Activated T-helper 2 cell treated with anti-CD3 and anti-CD28 coated beads, Interferon-gamma antibody, Interleukin-2, Interleukin-4, amounts not matched to agents 10 μg/mL and 5 μg/mL and 100 μg/mL, durations not matched to agents 14 hours and 24 hours and 36 hours (primary cell): ENCODE measurements at regions of chr4 and their contacts with region 1.

Region 1: DNA sequence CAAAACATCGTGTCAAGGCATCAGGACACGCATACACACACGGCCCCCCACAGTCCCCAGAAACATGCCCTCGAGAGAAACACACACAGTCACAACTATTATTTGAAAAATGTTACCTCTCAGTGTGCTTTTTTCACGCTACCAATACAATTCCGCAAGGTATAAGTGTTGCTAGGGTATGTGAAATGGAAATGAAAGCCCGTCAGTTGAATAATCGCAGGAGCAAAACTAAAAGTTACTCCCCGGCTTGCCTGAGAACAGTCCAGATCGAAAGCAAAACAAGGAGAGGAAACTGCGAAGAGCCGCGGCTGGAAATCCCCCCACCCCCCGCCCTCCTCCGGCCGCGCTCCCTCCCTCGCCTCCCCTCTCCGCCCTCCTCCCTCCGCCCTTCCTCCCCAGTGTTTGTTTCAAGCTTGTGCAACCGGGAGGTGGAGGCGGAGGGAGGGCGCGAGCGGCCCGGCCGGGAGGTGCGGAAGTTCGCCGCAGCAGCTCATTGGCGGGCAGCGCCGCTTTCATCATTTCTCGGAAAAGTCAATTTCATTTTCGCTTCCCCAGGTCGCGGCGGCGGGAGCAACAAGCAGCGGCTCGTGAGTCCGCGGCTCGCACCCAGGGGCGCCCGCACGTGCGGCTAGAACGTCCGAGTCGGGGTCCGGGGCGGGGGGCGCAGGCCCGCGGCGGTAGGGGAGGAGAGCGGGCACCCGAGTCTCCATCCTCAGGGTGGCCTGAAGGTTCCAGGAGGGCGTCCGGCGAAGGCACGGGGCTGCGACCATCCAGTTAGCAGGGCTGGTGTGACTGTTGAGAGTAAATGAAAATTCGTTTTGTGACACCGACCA is at the start of gene IRF2:
- DNase-seq: peak; percentile 96
- H3K4me3 Mint-ChIP-seq: peak within 1 kb of the TSS; percentile 95
- H3K27ac Mint-ChIP-seq: peak within 1 kb of the TSS; percentile 96
- H3K4me1 Mint-ChIP-seq: peaks cover 46% of the 10 kb centered on the region
- H3K27me3 Mint-ChIP-seq: no peaks in the 10 kb centered on the region
- total RNA-seq, gene IRF2: 47.6 and 53.2 TPM in 2 replicates

Region 2: DNA sequence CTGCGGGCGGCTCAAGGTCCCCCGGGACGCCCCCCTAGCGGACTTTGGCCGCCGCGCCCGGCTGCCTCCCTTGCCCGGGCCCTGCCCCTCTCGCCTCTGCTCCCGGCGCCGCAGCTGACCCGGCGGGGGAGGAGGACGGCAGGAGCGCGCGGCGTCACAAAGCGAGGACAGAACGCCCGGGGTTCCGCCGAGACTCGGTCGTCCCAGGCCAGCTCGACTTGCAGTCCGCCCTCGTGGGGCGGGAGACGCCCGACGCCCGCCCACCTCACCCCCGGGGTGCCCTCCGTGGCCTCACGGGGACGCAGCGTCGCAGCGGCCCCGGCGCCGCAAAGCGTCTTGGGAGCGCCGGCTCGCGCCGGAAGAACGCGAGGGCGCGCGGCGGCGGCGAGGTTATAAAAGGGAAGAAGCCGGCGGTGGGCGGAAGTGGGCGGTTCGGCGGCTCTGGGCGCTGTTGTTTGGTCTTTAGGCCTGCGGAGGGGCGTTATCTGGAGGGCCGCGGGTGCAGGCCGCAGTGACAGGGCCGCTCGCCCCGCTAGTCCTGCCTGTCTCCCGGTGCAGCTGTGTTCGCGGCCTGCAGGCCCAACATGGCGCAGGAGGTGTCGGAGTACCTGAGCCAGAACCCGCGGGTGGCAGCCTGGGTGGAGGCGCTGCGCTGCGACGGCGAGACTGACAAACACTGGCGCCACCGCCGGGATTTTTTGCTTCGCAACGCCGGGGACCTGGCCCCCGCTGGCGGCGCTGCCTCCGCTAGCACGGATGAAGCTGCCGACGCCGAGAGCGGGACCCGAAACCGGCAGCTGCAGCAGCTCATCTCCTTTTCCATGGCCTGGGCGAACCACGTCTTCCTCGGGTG is 1030.0 kb before region 1 on chr4 and contains the start of gene CDKN2AIP:
- intact Hi-C with region 1: loop called (anchors 10 kb)
- DNase-seq: peak; percentile 94
- H3K4me3 Mint-ChIP-seq: peak within 1 kb of the TSS; percentile 99
- H3K27ac Mint-ChIP-seq: peak within 1 kb of the TSS; percentile 98
- H3K4me1 Mint-ChIP-seq: peaks cover 38% of the 10 kb centered on the region
- H3K27me3 Mint-ChIP-seq: no peaks in the 10 kb centered on the region
- total RNA-seq, gene CDKN2AIP: 23.3 and 25.3 TPM in 2 replicates

Region 3: DNA sequence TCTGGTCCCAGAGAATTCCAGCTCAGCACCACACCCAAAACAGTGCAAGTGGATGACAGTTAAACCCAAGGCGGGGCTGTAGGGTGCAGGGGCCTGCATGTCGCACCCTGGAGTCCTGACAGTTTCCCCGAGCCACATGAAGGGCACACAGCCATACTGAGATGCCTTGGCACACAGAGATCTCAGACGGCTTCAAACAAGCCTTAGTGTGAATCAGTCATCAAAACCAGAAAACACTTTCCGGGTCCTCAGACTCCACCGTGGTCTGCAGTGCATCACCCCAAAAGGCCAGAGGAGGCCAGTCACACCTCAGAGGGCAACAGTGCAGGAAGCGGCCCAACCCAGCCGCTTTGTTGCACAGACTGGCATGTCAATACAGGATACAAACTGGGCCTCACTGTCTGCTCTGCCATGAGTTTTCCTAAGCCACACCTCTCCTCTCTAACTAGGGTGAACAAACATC is 192.2 kb before region 1 on chr4:
- intact Hi-C with region 1: loop called (anchors 1 kb)
- DNase-seq: peak; percentile 52
- H3K4me3 Mint-ChIP-seq: no peak overlapping the region
- H3K27ac Mint-ChIP-seq: peak overlapping the region; percentile 92
- H3K4me1 Mint-ChIP-seq: peaks cover 63% of the 10 kb centered on the region
- H3K27me3 Mint-ChIP-seq: no peaks in the 10 kb centered on the region

Region 4: DNA sequence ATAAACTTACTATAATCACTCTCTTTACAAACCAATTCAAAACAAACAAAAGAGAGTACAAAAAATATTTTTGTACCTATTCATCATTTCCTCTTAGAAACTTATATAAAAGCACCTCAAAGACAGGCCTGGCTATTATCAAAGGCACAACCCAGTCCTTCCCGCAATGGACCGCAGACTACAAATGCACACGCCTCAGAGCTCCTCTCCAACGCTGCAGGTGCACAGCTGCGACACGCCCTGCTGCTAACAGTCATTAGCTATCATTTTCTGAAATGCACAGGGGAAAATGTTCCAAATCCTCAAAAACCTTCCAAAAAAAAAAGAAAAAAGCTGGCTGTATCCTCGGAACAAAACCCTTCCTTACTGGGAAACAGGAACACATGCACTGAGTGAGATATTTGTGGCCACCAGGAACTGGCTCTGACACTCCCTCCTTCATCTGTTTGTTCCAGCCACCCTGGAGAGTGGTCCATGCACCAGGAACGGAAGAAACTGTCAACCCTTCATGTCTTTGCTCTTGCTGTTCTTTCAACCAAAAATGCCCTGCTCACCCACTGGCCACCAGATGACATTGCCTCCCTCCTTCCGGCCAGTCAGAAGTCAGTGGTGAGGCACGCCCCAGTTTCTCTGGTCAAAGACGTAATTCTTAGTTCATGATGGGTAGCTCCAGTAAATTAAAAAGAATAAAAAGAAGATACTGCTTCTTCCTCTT is 16.8 kb before region 1 on chr4:
- intact Hi-C with region 1: loop called (anchors 1 kb)
- DNase-seq: no peak
- H3K4me3 Mint-ChIP-seq: no peak overlapping the region
- H3K27ac Mint-ChIP-seq: no peak overlapping the region
- H3K4me1 Mint-ChIP-seq: peaks cover 68% of the 10 kb centered on the region
- H3K27me3 Mint-ChIP-seq: no peaks in the 10 kb centered on the region

Region 5: GRCh38 chr4:184538023-184538599 is 63.6 kb after region 1 on chr4:
- intact Hi-C with region 1: loop called (anchors 1 kb)
- DNase-seq: peak; percentile 53
- H3K4me3 Mint-ChIP-seq: peak overlapping the region; percentile 85
- H3K27ac Mint-ChIP-seq: peak overlapping the region; percentile 87
- H3K4me1 Mint-ChIP-seq: peaks cover 61% of the 10 kb centered on the region
- H3K27me3 Mint-ChIP-seq: no peaks in the 10 kb centered on the region

Region 6: GRCh38 chr4:184583738-184584502 is 109.4 kb after region 1 on chr4:
- intact Hi-C with region 1: loop called (anchors 2 kb)
- DNase-seq: no peak
- H3K4me3 Mint-ChIP-seq: no peak overlapping the region
- H3K27ac Mint-ChIP-seq: peak overlapping the region; percentile 85
- H3K4me1 Mint-ChIP-seq: peaks cover 26% of the 10 kb centered on the region
- H3K27me3 Mint-ChIP-seq: no peaks in the 10 kb centered on the region

Region 7: DNA sequence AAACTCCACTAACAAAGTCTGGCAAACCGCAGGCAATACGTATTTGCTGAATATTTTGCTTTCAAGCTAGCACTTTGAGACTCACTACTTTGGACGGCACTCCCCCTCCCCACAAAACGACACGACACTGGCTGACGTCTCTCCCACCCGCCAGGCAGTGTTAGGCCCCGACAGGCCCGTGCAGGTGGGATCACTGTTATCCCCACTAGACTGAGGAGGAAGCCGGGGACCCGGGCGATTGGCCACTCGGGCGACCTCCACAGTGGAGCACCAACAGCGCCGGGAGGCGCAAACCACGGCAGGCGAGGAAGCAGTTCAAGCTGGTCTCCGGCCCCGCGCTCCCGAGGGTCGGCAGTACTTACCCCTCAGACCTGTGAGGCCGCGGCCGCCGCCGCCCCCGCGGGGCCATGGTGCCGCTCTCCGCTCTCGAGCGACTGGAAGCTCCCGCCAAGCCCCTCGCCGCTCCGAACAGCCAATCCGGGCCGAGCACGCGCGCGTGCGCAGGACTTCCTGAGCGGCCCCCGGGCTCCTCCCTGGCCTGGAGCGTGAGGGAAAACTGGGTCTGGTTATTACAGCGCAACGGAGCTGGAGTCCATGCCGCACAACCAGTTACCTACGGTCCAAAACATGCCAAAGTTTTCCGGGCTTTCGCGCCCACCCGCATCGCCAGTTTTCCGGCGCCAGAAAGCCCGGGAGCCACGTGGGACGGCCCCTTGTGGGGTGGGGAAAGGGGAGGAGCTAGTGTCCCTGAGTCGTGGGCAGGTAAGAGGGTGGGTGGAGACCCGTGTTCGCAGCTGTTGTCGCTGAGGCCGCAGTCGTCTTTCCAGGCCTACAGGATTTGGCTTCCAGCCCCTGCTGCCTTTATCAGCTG is 259.4 kb after region 1 on chr4 and contains the start of gene CENPU:
- intact Hi-C with region 1: loop called (anchors 1 kb)
- DNase-seq: peak; percentile 96
- H3K4me3 Mint-ChIP-seq: peak within 1 kb of the TSS; percentile 93
- H3K27ac Mint-ChIP-seq: peak within 1 kb of the TSS; percentile 87
- H3K4me1 Mint-ChIP-seq: peaks cover 37% of the 10 kb centered on the region
- H3K27me3 Mint-ChIP-seq: no peaks in the 10 kb centered on the region
- total RNA-seq, gene CENPU: 60.9 and 74.2 TPM in 2 replicates